HCT116 (cell line): ENCODE measurements at regions of chr20 and their contacts with region 1.

Region 1: DNA sequence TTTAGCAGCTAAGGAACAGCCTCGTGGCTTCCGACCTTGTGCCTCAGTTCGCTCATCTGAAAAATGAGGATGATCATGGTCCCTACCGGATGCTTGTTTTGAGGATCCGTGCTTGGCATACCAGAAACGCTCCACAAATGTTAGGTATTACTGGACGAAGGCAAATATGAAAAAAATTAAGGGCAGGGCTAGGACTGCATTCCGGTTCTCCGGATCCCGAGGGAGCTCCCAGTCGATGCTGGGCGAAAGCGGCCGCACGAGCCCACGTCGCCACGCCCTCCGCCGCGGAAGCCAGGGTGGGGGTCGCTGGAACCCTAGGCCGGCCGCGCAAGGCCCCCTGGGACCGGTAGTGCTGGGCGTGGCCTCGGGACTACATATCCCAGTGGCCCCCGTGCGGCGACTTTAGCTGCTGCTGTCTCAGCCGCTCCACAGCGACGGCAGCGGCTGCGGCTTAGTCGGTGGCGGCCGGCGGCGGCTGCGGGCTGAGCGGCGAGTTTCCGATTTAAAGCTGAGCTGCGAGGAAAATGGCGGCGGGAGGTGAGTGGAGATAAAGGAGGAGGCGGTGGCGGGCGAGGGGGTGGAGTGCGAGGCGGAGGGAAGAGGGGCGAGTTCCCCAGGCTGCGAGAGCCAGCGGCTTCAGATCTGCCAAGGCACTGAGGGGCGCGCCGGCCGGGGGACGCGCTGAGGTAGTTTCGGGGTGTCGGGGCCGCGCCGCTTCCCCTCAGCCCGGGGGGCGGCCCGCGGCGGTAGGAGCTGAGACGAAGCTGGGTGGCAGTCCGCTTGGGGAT is at the start of gene NCOA3:
- DNase-seq: peak; percentile 82
- ATAC-seq: peak; percentile 97
- H3K4me3 ChIP-seq: peak within 1 kb of the TSS; percentile 86 to 87
- H3K27ac ChIP-seq: peak within 1 kb of the TSS; percentile 70
- H3K4me1 ChIP-seq: peaks cover 19 to 30% of the 10 kb centered on the region in 2 experiments; a peak in 3 of 4 replicates
- H3K27me3 ChIP-seq: no peaks in the 10 kb centered on the region
- CTCF ChIP-seq: peak in 2 of 3 experiments; percentile 8 to 32; a peak in 2 of 6 replicates
- POLR2A ChIP-seq: peak; percentile 94
- RAD21 ChIP-seq: peak; percentile 42; the same call in 1 of the 2 replicates
- total RNA-seq, gene NCOA3: 25.9 TPM

Region 2: DNA sequence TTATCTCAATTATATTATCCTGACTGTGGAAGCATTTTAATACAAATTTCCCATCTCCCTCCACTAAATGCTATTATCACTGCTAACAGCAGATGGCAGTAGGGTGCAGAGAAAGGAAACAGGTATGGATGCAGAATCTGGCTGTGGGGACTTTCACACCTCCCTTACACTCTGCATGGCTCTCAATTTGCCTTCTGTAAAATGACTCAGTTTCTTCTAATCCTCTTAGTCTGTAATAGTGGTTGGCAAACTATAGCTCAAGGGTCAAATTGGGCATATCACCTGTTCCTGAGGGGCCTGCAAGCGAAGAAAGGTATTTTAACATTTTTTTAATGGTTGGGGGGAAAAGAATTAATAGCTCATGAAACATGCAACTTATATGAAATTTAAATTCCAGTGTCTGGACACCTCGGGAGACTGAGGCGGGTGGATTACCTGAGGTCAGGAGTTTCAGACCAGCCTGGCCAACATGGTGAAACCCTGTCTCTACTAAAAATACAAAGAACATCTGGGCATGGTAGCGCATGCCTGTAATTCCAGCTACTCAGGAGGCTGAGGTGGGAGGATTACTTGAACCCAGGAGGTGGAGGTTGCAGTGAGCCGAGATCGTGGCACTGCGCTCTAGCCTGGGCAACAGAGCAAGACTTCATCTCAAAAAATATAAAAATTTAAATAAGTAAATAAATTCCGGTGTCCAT is 228.6 kb before region 1 on chr20:
- CTCF ChIA-PET with region 1: no interaction called
- POLR2A ChIA-PET with region 1: no interaction called
- RAD21 ChIA-PET with region 1: no interaction called
- intact Hi-C with region 1: loop called (anchors 5 kb)
- DNase-seq: peak; percentile 52
- ATAC-seq: peak; percentile 67
- H3K4me3 ChIP-seq: no peak overlapping the region
- H3K27ac ChIP-seq: no peak overlapping the region
- H3K4me1 ChIP-seq: peaks cover 36 to 44% of the 10 kb centered on the region in 2 experiments
- H3K27me3 ChIP-seq: no peaks in the 10 kb centered on the region
- CTCF ChIP-seq: peak; percentile 81 to 95 (median 93)
- POLR2A ChIP-seq: no peak
- RAD21 ChIP-seq: peak; percentile 96

Region 3: GRCh38 chr20:47400685-47401084 is 101.0 kb before region 1 on chr20:
- CTCF ChIA-PET with region 1: no interaction called
- POLR2A ChIA-PET with region 1: interaction called, 4 read pairs
- RAD21 ChIA-PET with region 1: no interaction called
- intact Hi-C with region 1: loop called (anchors 10 kb)
- DNase-seq: no peak
- ATAC-seq: peak; percentile 79
- H3K4me3 ChIP-seq: no peak overlapping the region
- H3K27ac ChIP-seq: no peak overlapping the region
- H3K4me1 ChIP-seq: peaks cover 0 to 13% of the 10 kb centered on the region in 2 experiments; a peak in 2 of 4 replicates
- H3K27me3 ChIP-seq: no peaks in the 10 kb centered on the region
- CTCF ChIP-seq: no peak
- POLR2A ChIP-seq: no peak
- RAD21 ChIP-seq: no peak

Region 4: GRCh38 chr20:47515843-47516242 is 14.2 kb after region 1 on chr20:
- CTCF ChIA-PET with region 1: interaction called, 3 read pairs
- POLR2A ChIA-PET with region 1: interaction called, 24 read pairs
- RAD21 ChIA-PET with region 1: no interaction called
- intact Hi-C with region 1: no loop called
- DNase-seq: no peak
- ATAC-seq: no peak
- H3K4me3 ChIP-seq: no peak overlapping the region
- H3K27ac ChIP-seq: no peak overlapping the region
- H3K4me1 ChIP-seq: peaks cover 41 to 49% of the 10 kb centered on the region in 2 experiments
- H3K27me3 ChIP-seq: no peaks in the 10 kb centered on the region
- CTCF ChIP-seq: no peak
- POLR2A ChIP-seq: no peak
- RAD21 ChIP-seq: no peak

Region 5: DNA sequence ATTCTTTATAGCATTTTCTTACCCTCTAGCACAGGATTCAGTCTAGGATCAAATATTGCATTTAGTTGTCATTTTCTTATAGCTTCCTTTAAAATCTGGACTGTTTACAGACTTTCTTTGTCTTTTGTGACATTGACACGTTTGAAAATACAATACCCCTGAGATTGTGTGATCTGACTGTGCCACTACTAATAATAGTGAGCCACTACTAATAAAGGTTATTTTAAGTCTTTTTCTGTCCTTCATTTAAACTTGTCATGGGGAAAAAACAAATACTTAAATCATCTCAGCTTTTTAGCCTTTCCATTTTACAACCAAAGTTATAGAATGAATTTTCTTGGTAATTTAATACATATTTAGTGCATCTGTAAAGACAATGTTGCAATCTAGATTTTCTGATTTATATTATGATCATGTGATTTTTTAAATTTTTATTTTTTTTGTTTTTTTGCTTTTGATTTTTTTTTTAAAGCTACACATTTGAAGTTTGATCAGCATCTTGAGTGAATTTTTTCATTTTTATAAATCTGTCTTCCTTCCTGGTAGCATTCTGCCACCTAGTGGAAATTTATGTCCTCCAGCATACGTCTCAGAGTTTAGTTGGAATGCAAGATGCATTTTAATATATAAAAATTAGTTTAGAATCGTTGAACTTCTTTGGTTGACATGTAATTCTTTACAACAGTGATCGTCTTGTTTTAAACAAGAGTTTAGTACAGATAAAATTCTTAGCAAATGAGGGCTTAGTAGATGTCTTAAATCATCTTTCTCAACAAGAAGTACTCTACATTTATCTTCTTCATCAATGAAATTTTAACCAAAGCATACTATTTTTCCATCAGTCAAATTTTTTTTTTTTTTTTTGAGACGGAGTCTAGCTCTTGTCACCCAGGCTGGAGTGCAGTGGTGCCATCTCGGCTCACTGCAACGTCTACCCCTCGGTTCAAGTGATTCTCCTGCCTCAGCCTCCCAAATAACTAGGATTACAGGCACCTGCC is 119.4 kb after region 1 on chr20:
- CTCF ChIA-PET with region 1: interaction called, 13 read pairs
- POLR2A ChIA-PET with region 1: no interaction called
- RAD21 ChIA-PET with region 1: interaction called, 3 to 6 read pairs
- intact Hi-C with region 1: loop called (anchors 5 kb)
- DNase-seq: peak; percentile 51
- ATAC-seq: no peak
- H3K4me3 ChIP-seq: no peak overlapping the region
- H3K27ac ChIP-seq: no peak overlapping the region
- H3K4me1 ChIP-seq: peaks cover 0 to 6% of the 10 kb centered on the region in 2 experiments; a peak in 2 of 4 replicates
- H3K27me3 ChIP-seq: no peaks in the 10 kb centered on the region
- CTCF ChIP-seq: peak; percentile 66 to 79 (median 73); a peak in 5 of 6 replicates
- POLR2A ChIP-seq: no peak
- RAD21 ChIP-seq: peak; percentile 83